Heart right ventricle (tissue), 16 donors: ENCODE measurements at regions of chr12 and their contacts with region 1.

Region 1: DNA sequence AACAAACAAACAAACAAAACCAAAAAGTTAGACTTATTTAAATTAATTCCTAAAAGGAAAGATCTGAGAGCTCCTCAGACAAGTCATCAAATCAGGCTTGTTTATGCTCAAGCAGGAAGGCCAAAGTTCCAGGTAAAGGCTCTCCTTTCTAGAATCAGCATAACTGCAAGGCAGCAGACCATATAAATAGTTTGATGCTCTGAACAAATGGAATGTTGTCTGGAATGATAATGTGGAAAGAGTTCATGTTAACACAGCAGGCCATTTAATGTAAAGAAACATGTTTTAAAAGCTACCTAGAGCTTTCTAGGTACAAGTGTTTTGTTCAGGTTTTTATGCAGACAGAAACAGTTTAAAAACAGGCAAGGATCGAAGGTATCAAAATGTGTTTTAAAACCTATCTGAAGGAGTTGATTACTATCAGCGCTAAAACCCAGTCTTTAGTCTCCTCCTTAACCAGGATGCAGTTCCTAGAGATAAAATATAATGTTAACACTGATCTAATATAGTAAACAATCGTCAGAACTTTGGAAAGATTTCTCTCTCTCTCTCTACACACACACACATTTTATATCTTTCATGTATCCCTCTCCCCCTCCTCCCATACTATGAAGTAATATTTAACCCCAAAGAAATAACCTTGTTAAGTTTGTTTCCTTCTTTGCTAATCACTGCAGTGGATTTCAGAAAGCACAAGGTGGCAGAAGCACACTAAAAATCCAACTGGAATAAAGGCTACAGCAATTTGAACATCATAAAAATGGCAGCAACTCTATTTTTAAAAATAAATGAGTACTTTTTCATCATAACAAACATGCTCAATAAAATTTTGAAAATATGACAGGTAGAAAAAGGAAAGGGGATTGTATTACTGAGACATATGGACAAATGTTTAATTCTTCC is 135.5 kb downstream of the PAWR start:
- DNase-seq: peak in 1 of 2 donors; percentile 15
- ATAC-seq: peak in 2 of 8 donors; percentile 40 to 47
- H3K4me3 ChIP-seq: no peak overlapping the region
- H3K27ac ChIP-seq: no peak overlapping the region
- H3K4me1 ChIP-seq: peaks cover 0 to 47% (median 12%) of the 10 kb centered on the region in 9 donors
- H3K27me3 ChIP-seq: no peaks in the 10 kb centered on the region
- CTCF ChIP-seq: peak; percentile 25 to 79 (median 58)

Region 2: DNA sequence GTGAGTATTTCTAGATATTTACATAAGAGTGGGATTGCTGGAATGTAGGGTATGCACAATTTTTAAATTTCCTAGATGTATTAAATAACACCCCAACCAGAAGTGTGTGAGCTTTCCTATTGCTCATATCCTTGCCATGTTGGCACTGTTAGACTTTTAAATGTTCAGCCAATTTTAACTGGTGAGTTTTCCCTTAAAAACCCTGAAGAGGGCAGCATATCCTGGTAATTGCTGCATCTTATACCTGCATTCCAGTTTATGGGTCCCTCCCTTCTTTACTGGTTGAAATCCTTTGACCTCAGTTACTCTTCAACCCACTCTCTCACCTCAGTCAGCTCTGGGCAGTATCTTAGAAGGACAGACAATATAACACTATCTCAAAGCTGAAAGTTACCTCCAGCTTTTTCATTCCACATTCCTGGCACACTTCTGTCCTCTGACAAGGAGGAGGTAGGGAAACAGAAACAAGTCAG is 135.1 kb before region 1 on chr12:
- intact Hi-C with region 1: loop called in 1 of 10 experiments (anchors 10 kb)
- DNase-seq: no peak
- ATAC-seq: peak in 2 of 8 donors; percentile 29 to 44
- H3K4me3 ChIP-seq: no peak overlapping the region
- H3K27ac ChIP-seq: no peak overlapping the region
- H3K4me1 ChIP-seq: peaks cover 0 to 15% (median 0%) of the 10 kb centered on the region in 9 donors
- H3K27me3 ChIP-seq: no peaks in the 10 kb centered on the region
- CTCF ChIP-seq: peak in 7 of 9 donors; percentile 20 to 56 (median 36)

Region 3: GRCh38 chr12:79690638-79691493 is 135.6 kb after region 1 on chr12 and contains the start of gene PAWR:
- intact Hi-C with region 1: loop called in 3 of 10 experiments (anchors 2 to 5 kb)
- DNase-seq: peak; percentile 22 to 53
- ATAC-seq: peak; percentile 51 to 85 (median 63)
- H3K4me3 ChIP-seq: peak within 1 kb of the TSS; percentile 68 to 92 (median 86)
- H3K27ac ChIP-seq: peak within 1 kb of the TSS in 9 of 10 donors; percentile 53 to 80 (median 73)
- H3K4me1 ChIP-seq: peaks cover 0 to 31% (median 8%) of the 10 kb centered on the region in 9 donors
- H3K27me3 ChIP-seq: peaks cover 0 to 45% (median 7%) of the 10 kb centered on the region in 7 donors
- CTCF ChIP-seq: peak in 4 of 9 donors; percentile 12 to 44 (median 22)
- total RNA-seq, gene PAWR: 3.5 to 16.6 (median 10.2) TPM